ENCODE measurements at regions of chr19 and their contacts with region 1.

Region 1: GRCh38 chr19:42295831-42296525 is 6.0 kb upstream of the PRR19 start:
- DNase-seq: peak; percentile 88
- H3K4me3 Mint-ChIP-seq: no peak overlapping the region
- H3K27ac Mint-ChIP-seq: peak overlapping the region; percentile 10
- H3K4me1 Mint-ChIP-seq: peaks cover 14% of the 10 kb centered on the region
- H3K27me3 Mint-ChIP-seq: no peaks in the 10 kb centered on the region

Region 2: DNA sequence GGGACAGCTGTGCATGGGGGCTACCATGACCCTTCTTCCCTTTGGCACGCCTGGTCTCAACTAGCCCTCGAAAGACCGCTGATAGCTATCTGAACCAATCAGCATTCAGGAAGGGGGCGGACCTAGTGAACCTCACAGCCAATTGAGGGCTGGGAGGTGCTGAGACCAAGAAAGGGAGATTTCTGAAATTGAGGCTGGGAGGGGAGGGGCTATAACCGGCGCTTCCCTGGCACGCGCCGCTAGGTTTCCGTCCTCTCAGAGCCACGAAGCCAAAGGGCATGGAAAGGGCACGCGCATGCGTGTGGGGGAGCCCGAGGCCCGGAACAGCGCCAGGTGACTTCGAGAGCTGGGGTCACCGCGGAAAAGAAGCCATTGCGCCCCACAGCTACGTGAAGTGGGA is 10.7 kb after region 1 on chr19:
- CTCF ChIA-PET with region 1: interaction called, 11 read pairs
- POLR2A ChIA-PET with region 1: interaction called, 3 read pairs
- DNase-seq: no peak
- H3K4me3 Mint-ChIP-seq: no peak overlapping the region
- H3K27ac Mint-ChIP-seq: no peak overlapping the region
- H3K4me1 Mint-ChIP-seq: peaks cover 19% of the 10 kb centered on the region
- H3K27me3 Mint-ChIP-seq: peaks cover 3% of the 10 kb centered on the region